GM12878 (cell line): ENCODE measurements at regions of chr11 and their contacts with region 1.

Region 1: DNA sequence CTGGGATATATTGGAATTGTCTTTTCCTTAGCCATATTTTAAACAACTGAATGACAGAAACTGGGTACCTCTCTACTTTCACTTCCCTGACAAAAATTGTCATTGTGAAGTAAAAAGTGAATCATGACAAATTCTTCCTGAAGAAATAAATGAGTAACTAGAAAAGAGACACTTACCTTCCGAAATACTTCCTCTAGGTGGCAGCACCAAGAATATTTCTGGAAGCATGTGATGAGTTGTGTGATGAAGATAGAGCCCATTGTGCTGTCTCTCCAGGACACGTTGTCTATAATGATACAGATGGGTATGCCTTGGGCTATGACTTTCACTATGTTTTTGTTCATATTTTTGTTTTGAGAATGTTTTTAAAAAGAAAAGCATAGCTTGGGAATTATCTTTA is 21.5 kb downstream of the CASP4 start:
- DNase-seq: peak; percentile 27
- ATAC-seq: peak; percentile 97
- H3K4me3 ChIP-seq: no peak overlapping the region
- H3K27ac ChIP-seq: no peak overlapping the region
- H3K4me1 ChIP-seq: no peaks in the 10 kb centered on the region
- H3K27me3 ChIP-seq: no peaks in the 10 kb centered on the region
- CTCF ChIP-seq: peak; percentile 51 to 53 (median 53)
- EP300 ChIP-seq: no peak
- POLR2A ChIP-seq: no peak
- RAD21 ChIP-seq: peak; percentile 52

Region 2: GRCh38 chr11:104968355-104968855 is 21.5 kb after region 1 on chr11 and contains the start of gene CASP4:
- CTCF ChIA-PET with region 1: interaction called, 15 read pairs
- POLR2A ChIA-PET with region 1: no interaction called
- RAD21 ChIA-PET with region 1: interaction called, 5 read pairs
- SMC1A ChIA-PET with region 1: interaction called, 28 read pairs
- in situ Hi-C with region 1: no loop called
- intact Hi-C with region 1: no loop called
- DNase-seq: peak; percentile 32
- ATAC-seq: peak; percentile 87
- H3K4me3 ChIP-seq: peak within 1 kb of the TSS; percentile 67
- H3K27ac ChIP-seq: peak within 1 kb of the TSS; percentile 84
- H3K4me1 ChIP-seq: peaks cover 4% of the 10 kb centered on the region
- H3K27me3 ChIP-seq: no peaks in the 10 kb centered on the region
- CTCF ChIP-seq: no peak
- EP300 ChIP-seq: no peak
- POLR2A ChIP-seq: peak; percentile 37; the same call in 1 of the 2 replicates
- RAD21 ChIP-seq: no peak
- polyA plus RNA-seq, gene CASP4: 48.9 to 59.6 TPM

Region 3: DNA sequence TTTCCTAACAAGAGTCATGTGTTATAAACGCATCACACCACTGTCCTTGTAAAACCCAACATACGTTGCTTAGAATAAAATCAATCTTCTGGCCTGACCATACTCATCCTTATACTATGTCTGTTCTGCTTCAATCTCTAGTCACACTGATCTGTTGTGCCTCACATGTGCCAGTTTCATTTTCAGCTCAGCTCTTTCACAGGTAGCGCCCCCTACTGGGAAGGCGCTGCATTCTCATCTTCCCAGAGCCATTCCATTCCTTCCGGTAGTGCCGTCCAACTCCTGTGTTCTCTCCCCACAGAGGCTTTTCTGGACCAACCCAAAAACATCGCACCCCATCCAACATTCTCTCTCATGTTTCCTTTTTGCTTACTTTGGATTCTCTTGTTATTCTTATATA is 53.9 kb after region 1 on chr11:
- CTCF ChIA-PET with region 1: interaction called, 14 read pairs
- POLR2A ChIA-PET with region 1: no interaction called
- RAD21 ChIA-PET with region 1: no interaction called
- SMC1A ChIA-PET with region 1: interaction called, 5 read pairs
- in situ Hi-C with region 1: no loop called
- intact Hi-C with region 1: loop called (anchors 5 kb)
- DNase-seq: peak; percentile 24
- ATAC-seq: peak; percentile 97
- H3K4me3 ChIP-seq: no peak overlapping the region
- H3K27ac ChIP-seq: no peak overlapping the region
- H3K4me1 ChIP-seq: no peaks in the 10 kb centered on the region
- H3K27me3 ChIP-seq: no peaks in the 10 kb centered on the region
- CTCF ChIP-seq: peak; percentile 73 to 92 (median 91)
- EP300 ChIP-seq: no peak
- POLR2A ChIP-seq: no peak
- RAD21 ChIP-seq: peak; percentile 66